RWPE1 (cell line): ENCODE measurements at regions of chr1 and their contacts with region 1.

Region 1: DNA sequence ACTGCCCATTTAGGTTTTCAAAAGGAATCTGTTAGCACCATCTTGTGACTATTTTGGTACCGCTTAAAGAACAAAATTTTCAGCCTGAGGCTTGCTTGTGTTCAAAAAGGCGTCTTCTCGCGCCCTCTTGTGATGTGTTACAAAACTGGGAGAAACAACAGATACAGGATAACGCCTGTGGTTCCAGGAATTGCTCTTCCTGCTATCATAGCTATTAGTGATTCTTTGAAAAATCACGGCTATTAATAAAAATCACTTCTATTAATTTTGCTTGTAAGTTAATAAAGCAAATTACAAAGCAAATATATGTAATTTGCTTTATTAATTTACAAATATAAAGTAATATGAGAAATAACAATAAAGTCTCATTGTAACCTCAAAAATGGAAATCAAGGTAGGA is 82.2 kb upstream of the ABCD3 start:
- DNase-seq: peak; percentile 57
- H3K27ac ChIP-seq: no peak overlapping the region
- CTCF ChIP-seq: peak; percentile 93

Region 2: GRCh38 chr1:94025383-94026340 is 310.3 kb before region 1 on chr1:
- CTCF ChIA-PET with region 1: interaction called, 38 read pairs
- POLR2A ChIA-PET with region 1: no interaction called
- DNase-seq: peak; percentile 75
- H3K27ac ChIP-seq: no peak overlapping the region
- CTCF ChIP-seq: peak; percentile 79

Region 3: GRCh38 chr1:94045465-94046056 is 290.4 kb before region 1 on chr1:
- CTCF ChIA-PET with region 1: interaction called, 87 read pairs
- POLR2A ChIA-PET with region 1: no interaction called
- DNase-seq: peak; percentile 95
- H3K27ac ChIP-seq: peak overlapping the region; percentile 69
- CTCF ChIP-seq: peak; percentile 81

Region 4: DNA sequence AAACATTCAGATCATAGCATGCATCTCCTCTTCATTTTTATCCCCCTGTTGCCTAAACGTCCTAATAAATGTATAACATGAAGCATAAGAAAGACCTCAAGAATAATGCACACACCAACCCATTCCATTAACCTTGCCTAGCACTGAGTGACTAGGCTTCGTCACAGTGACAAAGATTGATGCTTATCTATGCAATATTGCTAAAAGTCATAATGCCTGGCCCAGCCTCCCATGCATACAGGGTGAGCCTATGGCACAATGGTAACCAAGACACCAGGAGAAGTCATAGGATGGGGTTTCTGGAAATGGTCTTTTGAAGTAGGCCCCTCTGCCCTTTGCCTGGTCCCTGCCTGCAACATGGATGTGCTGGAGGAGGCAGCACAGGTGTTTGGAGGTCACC is 248.8 kb before region 1 on chr1:
- CTCF ChIA-PET with region 1: no interaction called
- POLR2A ChIA-PET with region 1: no interaction called
- DNase-seq: no peak
- H3K27ac ChIP-seq: no peak overlapping the region
- CTCF ChIP-seq: no peak

Region 5: DNA sequence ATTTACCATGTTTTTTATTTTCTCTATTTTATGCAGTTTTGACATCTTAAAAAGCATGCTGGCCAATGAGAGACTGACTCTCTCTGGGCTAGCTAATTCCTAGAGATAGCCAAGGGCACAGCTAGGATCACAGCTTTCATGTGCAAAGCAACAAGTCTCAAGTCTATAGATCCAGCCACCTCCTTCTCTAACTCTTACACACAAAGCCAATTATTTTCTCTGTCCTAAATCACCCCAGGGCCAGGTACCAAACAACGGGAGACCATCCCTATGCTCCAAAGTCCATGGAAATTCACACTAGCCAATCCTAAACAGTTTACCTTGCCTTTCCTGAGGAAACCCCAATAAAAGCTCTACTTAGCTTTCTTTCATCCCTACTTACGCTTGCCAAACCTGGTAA is 136.6 kb before region 1 on chr1:
- CTCF ChIA-PET with region 1: interaction called, 11 read pairs
- POLR2A ChIA-PET with region 1: no interaction called
- DNase-seq: no peak
- H3K27ac ChIP-seq: no peak overlapping the region
- CTCF ChIP-seq: no peak

Region 6: GRCh38 chr1:94325379-94326302 is 10.3 kb before region 1 on chr1:
- CTCF ChIA-PET with region 1: interaction called, 17 read pairs
- POLR2A ChIA-PET with region 1: no interaction called
- DNase-seq: peak; percentile 94
- H3K27ac ChIP-seq: peak overlapping the region; percentile 95
- CTCF ChIP-seq: no peak